Ascending aorta (tissue), 2 donors: ENCODE measurements at regions of chr18 and their contacts with region 1.

Region 1: DNA sequence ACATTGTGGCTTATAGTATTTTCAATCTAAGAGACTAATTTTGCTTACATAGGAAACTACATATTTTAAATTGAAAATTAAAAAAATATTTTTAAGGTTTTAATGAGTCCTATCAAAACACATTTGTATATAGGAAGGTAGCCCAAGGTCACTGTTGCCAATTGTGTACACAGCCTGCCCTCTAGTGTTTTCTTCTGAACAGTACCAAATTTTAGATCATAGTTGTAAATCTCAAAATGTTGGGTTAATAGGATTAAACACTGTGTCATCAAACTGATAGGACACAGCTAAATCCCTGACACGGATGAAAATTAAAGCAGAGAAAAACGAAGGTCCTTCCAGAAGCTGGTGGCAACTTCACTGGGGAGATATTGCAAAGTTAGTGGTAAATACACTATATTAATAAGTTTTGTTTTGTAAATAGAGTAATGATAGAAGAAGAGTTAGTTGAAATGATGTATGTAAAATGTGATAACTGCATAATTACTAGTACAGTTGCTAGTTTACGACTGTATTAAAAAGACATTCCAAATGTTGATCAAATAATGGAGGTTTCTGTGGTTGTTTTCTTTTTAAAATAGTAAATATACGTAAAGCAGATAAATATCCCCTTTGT is 19.7 kb downstream of the CLUL1 start:
- DNase-seq: no peak
- H3K4me3 ChIP-seq: no peak overlapping the region
- H3K27ac ChIP-seq: no peak overlapping the region
- H3K4me1 ChIP-seq: no peaks in the 10 kb centered on the region
- H3K27me3 ChIP-seq: no peaks in the 10 kb centered on the region
- CTCF ChIP-seq: peak; percentile 56 to 86 (median 60)

Region 2: GRCh38 chr18:286515-287310 is 329.8 kb before region 1 on chr18:
- intact Hi-C with region 1: loop called (anchors 1 kb)
- DNase-seq: no peak
- H3K4me3 ChIP-seq: no peak overlapping the region
- H3K27ac ChIP-seq: no peak overlapping the region
- H3K4me1 ChIP-seq: no peaks in the 10 kb centered on the region
- H3K27me3 ChIP-seq: no peaks in the 10 kb centered on the region
- CTCF ChIP-seq: peak in 2 of 3 experiments; percentile 21 to 57

Region 3: DNA sequence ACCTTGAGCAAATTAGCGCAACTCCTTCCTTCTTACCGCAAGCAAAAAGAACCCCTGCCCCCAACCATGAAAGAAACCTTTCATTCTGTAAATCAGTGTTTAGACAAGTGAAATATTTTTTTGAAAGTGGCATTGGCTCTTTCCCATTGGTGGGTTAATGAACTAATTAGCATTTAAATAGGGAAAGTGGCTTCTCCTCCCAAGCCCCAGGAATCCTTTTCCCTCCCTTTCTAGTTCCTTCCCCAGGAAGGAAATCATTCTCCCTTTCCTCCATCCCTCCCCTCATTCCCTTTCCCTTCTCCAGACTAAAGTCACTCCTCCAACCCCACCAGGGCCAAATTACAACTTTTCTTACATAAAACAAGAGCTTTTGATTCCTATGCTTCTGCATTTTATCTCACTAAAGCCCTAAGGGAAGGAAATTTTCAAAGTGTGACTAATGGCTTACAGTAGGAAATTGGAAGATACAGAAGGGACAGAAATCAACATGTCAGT is 18.1 kb after region 1 on chr18:
- intact Hi-C with region 1: no loop called
- DNase-seq: no peak
- H3K4me3 ChIP-seq: no peak overlapping the region
- H3K27ac ChIP-seq: no peak overlapping the region
- H3K4me1 ChIP-seq: no peaks in the 10 kb centered on the region
- H3K27me3 ChIP-seq: no peaks in the 10 kb centered on the region
- CTCF ChIP-seq: no peak